Activated CD4-positive, alpha-beta T cell treated with anti-CD3 and anti-CD28 coated beads, Interleukin-2, amount 10 ng/mL, durations not matched to agents 24 days and 14 days (primary cell): ENCODE measurements at regions of chr4 and their contacts with region 1.

Region 1: GRCh38 chr4:184825896-184826690 is at the start of gene ACSL1:
- DNase-seq: peak; percentile 93
- H3K4me3 Mint-ChIP-seq: peak within 1 kb of the TSS; percentile 94
- H3K27ac Mint-ChIP-seq: peak within 1 kb of the TSS; percentile 97
- H3K4me1 Mint-ChIP-seq: peaks cover 33% of the 10 kb centered on the region
- H3K27me3 Mint-ChIP-seq: peaks cover 11% of the 10 kb centered on the region
- total RNA-seq, gene ACSL1: 38.3 and 41.7 TPM in 2 replicates

Region 2: DNA sequence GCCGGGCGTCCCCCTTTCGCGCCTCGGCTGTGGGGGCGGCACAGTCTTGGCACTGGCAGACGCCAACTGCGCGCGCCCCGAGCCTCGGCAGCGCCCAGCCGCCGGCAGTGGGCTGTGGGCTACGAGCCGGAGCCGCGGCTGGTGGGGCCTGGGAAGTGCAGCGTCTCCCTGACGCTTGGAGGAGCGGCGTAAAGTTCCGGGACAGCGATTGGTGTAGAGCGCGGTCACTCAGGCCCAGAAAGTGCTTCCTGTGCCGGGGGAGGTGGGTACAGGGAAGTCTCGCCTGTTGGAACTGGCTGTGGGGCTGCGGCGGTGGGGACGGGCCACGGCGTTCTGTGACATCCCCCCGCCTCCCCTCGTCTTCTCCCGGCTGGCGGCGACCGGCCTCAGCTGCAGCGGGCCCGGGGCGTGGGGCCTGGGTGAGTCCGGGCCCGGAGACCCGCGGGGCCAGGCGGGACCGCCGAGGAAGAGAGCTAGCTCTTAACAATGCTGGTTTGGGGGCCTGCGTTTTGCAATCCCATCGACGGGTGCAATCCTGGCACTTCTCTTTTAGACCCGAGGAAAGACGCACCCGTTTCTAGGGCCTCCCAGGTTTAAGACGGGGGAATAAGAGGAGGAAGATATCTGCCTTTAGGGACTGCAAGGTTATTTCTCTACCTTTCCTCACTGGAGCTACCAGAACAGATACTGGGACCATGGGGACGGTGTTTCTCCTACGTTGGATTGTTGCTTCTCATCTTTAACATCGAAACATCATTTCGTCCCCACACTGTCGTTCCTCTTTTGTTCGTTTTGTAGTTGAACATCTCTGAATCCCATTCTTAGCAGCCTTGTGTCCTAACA is 1166.8 kb before region 1 on chr4 and contains the starts of genes RWDD4 and TRAPPC11:
- intact Hi-C with region 1: loop called (anchors 2 kb)
- DNase-seq: peak; percentile 98
- H3K4me3 Mint-ChIP-seq: peak within 1 kb of the TSS; percentile 82
- H3K27ac Mint-ChIP-seq: peak within 1 kb of the TSS; percentile 96
- H3K4me1 Mint-ChIP-seq: peaks cover 30% of the 10 kb centered on the region
- H3K27me3 Mint-ChIP-seq: no peaks in the 10 kb centered on the region
- total RNA-seq, gene RWDD4: 27.3 and 31.5 TPM in 2 replicates
- total RNA-seq, gene TRAPPC11: 26.3 and 33.4 TPM in 2 replicates

Region 3: DNA sequence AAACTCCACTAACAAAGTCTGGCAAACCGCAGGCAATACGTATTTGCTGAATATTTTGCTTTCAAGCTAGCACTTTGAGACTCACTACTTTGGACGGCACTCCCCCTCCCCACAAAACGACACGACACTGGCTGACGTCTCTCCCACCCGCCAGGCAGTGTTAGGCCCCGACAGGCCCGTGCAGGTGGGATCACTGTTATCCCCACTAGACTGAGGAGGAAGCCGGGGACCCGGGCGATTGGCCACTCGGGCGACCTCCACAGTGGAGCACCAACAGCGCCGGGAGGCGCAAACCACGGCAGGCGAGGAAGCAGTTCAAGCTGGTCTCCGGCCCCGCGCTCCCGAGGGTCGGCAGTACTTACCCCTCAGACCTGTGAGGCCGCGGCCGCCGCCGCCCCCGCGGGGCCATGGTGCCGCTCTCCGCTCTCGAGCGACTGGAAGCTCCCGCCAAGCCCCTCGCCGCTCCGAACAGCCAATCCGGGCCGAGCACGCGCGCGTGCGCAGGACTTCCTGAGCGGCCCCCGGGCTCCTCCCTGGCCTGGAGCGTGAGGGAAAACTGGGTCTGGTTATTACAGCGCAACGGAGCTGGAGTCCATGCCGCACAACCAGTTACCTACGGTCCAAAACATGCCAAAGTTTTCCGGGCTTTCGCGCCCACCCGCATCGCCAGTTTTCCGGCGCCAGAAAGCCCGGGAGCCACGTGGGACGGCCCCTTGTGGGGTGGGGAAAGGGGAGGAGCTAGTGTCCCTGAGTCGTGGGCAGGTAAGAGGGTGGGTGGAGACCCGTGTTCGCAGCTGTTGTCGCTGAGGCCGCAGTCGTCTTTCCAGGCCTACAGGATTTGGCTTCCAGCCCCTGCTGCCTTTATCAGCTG is 92.2 kb before region 1 on chr4 and contains the start of gene CENPU:
- intact Hi-C with region 1: loop called (anchors 1 kb)
- DNase-seq: peak; percentile 99
- H3K4me3 Mint-ChIP-seq: peak within 1 kb of the TSS; percentile 96
- H3K27ac Mint-ChIP-seq: peak within 1 kb of the TSS; percentile 93
- H3K4me1 Mint-ChIP-seq: peaks cover 41% of the 10 kb centered on the region
- H3K27me3 Mint-ChIP-seq: no peaks in the 10 kb centered on the region
- total RNA-seq, gene CENPU: 71.7 and 75.5 TPM in 2 replicates

Region 4: DNA sequence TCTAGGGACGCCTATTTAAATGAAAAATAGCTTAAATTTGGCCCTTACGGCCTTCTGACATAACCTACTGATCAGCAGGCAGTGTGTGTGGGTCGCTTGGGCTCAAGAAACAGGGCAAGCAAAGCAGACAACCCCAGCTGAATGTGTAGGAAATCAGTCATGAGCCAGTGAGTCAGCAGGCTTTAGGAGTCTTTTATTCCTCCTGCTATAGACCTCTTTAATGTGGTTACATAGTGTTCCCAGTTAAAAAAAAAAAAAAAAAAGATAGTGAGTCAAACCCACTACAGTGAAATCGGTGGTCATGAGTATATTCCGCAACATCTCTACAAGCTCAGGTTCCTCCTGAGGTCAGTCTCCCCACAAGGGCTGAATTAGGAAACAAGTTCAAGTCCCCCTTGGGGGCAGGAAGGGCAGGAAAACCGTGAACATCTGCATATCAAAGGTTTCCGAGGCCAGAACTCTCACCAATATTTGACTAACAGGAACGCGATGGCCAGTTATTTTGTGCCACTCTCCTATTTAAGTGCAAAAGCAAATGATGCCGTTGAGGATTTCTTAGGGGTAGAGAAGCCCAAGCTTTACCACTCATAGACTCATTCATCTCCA is 33.0 kb before region 1 on chr4:
- intact Hi-C with region 1: loop called (anchors 1 kb)
- DNase-seq: peak; percentile 69
- H3K4me3 Mint-ChIP-seq: peak overlapping the region; percentile 40
- H3K27ac Mint-ChIP-seq: peak overlapping the region; percentile 74
- H3K4me1 Mint-ChIP-seq: peaks cover 50% of the 10 kb centered on the region
- H3K27me3 Mint-ChIP-seq: no peaks in the 10 kb centered on the region

Region 5: GRCh38 chr4:185142912-185143595 is 317.0 kb after region 1 on chr4 and contains the start of gene SLC25A4:
- intact Hi-C with region 1: loop called (anchors 10 kb)
- DNase-seq: peak; percentile 89
- H3K4me3 Mint-ChIP-seq: peak within 1 kb of the TSS; percentile 86
- H3K27ac Mint-ChIP-seq: peak within 1 kb of the TSS; percentile 65
- H3K4me1 Mint-ChIP-seq: peaks cover 7% of the 10 kb centered on the region
- H3K27me3 Mint-ChIP-seq: peaks cover 65% of the 10 kb centered on the region
- total RNA-seq, gene SLC25A4: 1.7 and 1.9 TPM in 2 replicates